OCI-LY7 (cell line): ENCODE measurements at regions of chr3 and their contacts with region 1.

Region 1: DNA sequence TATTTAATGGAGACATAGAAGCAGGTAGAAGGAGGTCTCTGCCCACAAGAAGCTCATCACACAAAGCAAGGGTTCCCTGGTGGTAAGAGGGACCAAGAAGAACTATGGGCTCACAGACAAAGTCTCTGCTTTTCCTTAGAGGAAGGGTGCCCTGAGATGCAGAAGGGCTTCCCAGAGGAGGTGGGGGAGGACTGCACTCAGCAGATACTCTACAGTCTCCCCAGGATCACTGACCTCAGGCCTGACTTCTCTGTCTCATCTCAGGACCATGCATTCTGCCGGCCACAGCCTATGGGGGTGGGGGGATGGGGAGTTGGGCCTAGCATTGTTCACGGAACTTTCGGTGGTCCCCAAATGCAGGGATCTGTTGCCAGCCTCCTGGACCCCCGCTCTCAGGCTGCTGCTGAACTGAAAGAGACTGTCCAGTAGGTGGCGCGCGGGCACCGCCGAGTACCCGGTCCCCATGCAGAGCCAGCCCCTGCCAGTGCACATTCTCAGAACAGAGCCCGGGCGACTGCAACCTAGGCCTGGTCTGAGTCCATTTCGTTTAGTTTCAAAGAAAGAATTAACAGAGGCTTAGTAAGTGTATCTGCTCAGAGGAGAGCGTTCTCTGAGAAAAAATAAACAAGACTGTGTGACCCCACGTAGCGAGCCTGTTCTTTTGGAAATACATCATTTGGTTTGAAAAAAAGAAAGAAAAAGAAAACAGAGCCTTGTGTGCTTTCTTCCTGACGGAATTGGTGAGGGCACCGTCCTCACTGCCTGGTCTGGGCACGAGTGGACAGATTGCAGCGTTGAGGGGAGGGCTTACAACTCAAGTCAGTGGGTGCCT is 74.1 kb downstream of the LRTM1 start:
- DNase-seq: peak; percentile 60
- H3K4me3 ChIP-seq: no peak overlapping the region
- H3K27ac ChIP-seq: no peak overlapping the region
- H3K4me1 ChIP-seq: no peaks in the 10 kb centered on the region
- CTCF ChIP-seq: peak; percentile 90

Region 2: DNA sequence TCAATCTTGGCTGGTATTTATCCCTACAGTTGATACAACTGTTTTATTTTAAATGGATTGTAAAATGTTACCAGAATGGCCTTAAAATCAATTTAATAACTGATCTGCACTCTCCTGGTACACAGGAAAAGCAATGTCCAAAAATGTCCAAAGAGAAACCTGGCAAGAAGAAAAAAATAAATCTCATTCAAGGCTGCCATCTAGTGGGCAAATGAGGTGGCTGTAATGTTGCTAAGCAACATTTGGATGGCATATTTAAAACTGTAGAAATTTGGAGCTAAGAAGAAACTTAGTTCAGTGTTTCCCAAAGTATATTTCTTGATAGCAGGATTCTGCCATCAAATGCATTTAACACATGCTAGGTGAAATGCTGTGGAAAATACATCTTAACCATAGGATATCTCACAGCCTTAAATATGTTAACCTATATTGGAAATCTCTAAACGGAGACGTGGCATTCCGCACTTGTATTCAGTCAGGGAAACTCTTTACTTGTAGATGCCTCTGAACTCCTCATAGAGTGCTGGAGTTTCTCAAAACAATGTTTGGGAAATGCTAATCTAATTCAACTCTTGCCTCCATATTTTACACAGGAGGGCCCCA is 1397.7 kb after region 1 on chr3:
- CTCF ChIA-PET with region 1: no interaction called
- POLR2A ChIA-PET with region 1: no interaction called
- intact Hi-C with region 1: loop called (anchors 2 kb)
- DNase-seq: peak; percentile 53
- H3K4me3 ChIP-seq: no peak overlapping the region
- H3K27ac ChIP-seq: no peak overlapping the region
- H3K4me1 ChIP-seq: no peaks in the 10 kb centered on the region
- CTCF ChIP-seq: peak; percentile 97